MCF 10A (cell line): ENCODE measurements at regions of chr10 and their contacts with region 1.

Region 1: DNA sequence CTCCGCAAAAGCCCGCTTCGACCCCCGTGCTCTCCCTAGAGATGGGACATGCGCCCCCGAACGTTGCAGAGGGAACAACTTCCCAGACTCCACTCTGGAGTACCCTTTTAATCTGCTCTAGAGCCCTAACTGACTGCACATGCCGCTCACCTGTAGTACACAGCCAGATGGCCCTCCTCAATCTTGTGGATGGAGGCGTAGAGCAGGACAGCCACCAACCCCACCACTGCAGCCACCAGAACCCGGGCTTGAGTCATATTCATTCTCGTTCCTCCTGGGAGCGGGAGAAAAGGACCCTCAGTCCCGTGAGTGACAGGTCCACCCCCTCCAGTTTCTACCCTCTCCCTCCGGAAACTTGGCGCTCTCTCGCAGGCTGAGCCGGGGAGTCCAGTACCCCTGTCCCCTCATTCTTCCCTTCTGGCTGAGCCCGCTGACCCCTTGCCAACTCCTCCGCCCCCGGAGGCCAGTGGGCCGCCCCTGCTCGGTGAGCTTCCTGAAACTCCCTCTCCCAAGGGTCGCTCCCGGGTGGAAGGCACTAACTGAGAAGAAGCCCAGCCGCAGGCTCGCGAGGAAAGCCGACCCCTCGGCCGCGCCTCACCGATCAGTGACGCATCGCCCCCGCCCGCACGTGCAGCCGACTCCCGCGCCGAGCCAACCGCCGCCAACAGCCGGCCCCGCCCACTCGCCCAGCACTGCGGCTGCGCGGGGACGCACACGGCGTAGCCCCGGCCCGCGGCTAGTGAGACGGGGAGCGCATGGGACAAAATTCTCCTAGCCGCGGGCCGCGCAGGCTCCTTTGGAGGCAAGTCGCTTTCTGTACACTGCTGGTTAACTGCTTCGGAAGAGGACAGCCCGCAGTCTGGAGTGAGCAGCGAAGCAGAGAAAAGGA is at the start of gene ERLIN1:
- DNase-seq: peak; percentile 94
- H3K4me3 Mint-ChIP-seq: peak within 1 kb of the TSS; percentile 94
- H3K27ac Mint-ChIP-seq: peak within 1 kb of the TSS; percentile 90
- H3K4me1 Mint-ChIP-seq: peaks cover 31% of the 10 kb centered on the region
- H3K27me3 Mint-ChIP-seq: no peaks in the 10 kb centered on the region
- CTCF ChIP-seq: no peak
- total RNA-seq, gene ERLIN1: 38.0 and 42.9 TPM in 2 replicates

Region 2: DNA sequence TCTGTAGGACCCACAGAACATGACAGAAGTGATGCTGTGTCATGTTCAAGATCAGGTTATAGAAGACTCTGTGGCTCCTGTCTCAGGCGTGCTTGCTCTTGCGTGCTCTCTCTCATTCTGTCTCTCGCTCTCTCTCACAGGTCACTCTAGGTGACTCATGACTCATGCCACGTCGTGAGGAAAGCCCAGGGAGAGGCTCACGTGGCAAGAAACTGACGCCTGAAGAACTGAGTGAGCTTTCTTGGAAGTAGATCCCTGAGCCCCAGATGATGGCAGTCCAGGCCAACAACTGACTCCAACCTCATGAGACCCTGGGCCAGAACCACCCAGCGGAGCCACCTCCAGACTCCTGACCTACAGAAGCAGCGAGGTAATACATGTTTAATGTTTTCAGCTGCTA is 279.1 kb before region 1 on chr10:
- CTCF ChIA-PET with region 1: interaction called, 3 read pairs
- POLR2A ChIA-PET with region 1: interaction called, 10 read pairs
- intact Hi-C with region 1: no loop called
- DNase-seq: peak; percentile 96
- H3K4me3 Mint-ChIP-seq: no peak overlapping the region
- H3K27ac Mint-ChIP-seq: peak overlapping the region; percentile 80
- H3K4me1 Mint-ChIP-seq: peaks cover 14% of the 10 kb centered on the region
- H3K27me3 Mint-ChIP-seq: no peaks in the 10 kb centered on the region
- CTCF ChIP-seq: peak; percentile 38

Region 3: DNA sequence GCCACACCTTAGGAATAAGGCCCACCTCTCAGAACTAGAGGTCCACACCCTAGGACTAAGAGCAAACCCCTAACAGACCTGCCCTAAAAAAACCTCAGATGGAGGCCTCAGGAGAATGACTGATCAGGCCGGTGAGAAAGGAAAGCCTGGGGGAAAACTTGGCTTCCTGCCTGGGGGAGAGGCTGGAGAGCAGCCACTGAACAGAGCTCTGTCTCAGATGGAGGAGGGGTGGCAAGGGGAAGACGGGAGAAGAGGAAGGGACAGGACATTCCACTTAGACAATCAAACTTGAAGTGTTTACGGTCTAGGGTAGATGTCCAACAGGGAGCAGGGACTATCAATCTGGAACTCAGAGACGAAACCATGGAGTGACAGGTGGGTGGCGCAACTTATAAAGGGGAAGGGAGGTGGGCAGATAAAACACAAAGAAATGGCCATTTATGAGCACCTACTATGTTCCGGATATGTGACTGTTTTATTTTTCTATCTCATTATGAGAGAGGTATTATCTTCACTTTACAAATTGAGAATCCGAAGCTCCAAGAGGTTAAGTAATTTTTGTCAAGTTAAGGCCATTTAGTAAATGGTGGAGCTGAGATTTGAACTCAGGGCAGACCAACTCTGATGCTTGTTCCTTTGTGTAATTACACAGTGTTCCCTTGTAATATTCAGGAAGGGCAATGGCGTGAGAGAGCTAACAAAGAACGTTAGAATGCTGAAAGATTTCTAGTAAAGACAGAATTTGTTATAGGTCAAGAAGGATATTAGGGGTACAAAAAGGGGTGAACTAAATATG is 258.5 kb before region 1 on chr10:
- CTCF ChIA-PET with region 1: no interaction called
- POLR2A ChIA-PET with region 1: no interaction called
- intact Hi-C with region 1: no loop called
- DNase-seq: peak; percentile 73
- H3K4me3 Mint-ChIP-seq: peak overlapping the region; percentile 42
- H3K27ac Mint-ChIP-seq: peak overlapping the region; percentile 44
- H3K4me1 Mint-ChIP-seq: peaks cover 50% of the 10 kb centered on the region
- H3K27me3 Mint-ChIP-seq: no peaks in the 10 kb centered on the region
- CTCF ChIP-seq: no peak

Region 4: DNA sequence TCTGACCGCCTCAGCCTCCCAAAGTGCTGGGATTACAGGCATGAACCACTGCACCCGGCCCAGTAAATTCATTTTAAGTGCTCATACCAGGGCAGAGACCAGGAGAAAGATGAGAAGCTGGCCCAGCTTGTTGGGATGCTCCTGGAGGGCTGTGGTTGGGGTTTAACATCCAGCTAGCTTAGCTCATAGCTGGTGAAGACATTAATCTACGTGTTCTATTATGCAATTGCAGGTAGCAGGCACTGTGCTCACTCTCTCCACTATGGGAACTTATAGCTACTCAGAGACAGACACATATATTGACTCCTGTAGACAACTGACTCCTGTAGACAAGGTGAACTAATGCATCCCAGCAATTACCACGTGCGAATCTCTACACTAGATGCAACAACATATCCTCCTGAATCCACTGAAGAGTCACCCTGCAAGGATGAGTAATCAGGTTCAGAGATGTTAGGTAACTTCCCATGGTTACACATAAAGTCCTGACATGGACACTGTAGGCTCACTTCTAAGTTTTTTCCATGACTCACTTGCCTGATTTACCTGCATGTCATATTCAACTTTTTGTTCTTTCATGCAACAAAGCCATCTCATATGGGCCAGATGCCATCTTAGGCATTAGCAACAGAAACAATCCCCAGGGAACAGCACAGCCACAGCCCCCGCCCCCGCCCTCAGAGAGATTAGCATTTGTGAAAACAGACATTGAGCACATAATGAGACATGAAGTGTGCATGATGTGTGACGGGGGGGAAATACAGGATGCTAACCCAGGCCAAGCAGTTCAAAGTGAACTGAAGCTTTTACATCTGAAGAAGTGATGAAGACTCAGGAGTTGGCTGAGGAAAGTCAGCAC is 37.0 kb before region 1 on chr10:
- CTCF ChIA-PET with region 1: interaction called, 4 read pairs
- POLR2A ChIA-PET with region 1: interaction called, 16 read pairs
- intact Hi-C with region 1: loop called (anchors 2 kb)
- DNase-seq: peak; percentile 96
- H3K4me3 Mint-ChIP-seq: no peak overlapping the region
- H3K27ac Mint-ChIP-seq: peak overlapping the region; percentile 84
- H3K4me1 Mint-ChIP-seq: peaks cover 28% of the 10 kb centered on the region
- H3K27me3 Mint-ChIP-seq: no peaks in the 10 kb centered on the region
- CTCF ChIP-seq: no peak

Region 5: DNA sequence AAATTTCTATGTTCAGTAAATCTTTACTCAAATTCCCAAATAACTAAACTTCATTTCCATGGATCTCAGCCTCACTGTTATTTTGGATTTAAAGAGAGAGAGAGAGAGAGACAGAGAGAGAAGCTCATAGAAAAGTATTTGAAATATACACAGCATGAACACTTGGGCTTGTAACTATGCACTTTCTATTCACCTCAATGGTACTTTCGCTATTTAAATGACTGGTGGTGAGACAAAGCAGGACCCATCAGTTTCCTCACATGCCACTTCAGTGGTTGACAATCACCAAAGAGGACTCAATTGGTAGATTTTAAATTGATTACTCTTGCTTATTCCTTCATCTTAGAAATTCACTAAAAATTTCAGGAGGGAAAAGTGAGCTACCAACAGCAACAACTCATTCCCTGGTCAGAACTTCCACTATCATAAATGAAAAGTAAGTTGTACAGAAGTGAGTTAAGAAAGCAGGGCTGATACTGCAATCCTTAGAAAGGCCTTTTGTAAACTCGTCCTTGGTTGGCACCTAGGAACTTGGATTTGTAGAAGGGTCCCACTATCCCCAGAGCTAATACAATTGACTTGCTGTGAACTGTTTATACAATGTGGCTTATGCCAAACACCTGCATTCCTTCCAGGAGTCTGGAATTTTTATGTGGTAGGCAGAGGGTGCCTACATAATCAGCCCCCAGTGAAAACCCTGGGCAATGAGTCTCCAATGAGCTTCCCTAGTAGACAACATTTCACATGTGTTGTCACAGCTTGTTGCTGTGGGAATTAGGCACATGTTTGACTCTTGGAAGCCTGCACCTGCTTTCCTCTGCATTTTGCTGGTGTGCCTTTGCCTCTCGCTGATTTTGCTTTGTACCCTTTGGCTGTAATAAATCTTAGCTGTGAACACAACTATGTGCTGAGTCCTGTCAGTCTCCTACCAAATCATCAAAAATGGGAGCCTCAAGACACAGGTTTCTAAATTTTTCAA is 10.6 kb before region 1 on chr10:
- CTCF ChIA-PET with region 1: no interaction called
- POLR2A ChIA-PET with region 1: interaction called, 17 read pairs
- intact Hi-C with region 1: no loop called
- DNase-seq: no peak
- H3K4me3 Mint-ChIP-seq: no peak overlapping the region
- H3K27ac Mint-ChIP-seq: no peak overlapping the region
- H3K4me1 Mint-ChIP-seq: peaks cover 11% of the 10 kb centered on the region
- H3K27me3 Mint-ChIP-seq: no peaks in the 10 kb centered on the region
- CTCF ChIP-seq: no peak

Region 6: DNA sequence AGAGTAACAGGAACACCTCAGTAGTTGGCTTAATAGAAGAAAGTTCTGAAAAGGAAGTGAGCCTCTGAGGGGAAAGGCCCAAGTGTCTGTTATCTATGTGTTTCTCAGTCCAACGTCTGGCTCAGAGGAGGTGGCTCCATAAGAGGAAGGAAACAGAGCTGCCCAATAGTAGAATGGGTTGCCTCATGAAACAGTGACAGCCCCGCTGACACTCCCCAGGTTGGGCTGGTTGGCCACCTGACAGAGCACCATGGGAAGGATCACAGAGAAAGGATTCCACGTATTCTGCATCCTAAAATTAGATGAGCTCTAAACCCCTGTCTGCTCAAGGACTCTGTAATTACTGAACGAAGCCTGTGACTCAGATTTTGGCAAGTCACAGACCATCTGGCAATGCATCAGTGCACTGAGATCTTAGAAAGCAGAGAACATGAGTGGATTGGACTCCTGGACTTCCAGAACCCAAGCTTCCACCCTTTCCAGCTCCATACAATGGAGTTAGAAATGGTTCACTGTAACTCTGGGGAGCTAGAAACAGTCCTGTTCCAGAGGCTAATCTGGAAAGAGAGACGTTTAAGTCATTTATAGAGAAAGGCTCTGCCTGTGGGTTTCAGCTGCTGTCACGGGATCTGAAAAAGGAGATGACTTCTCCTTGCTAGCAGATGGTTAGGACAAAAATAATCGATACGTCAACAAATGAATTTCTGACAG is 141.6 kb after region 1 on chr10:
- CTCF ChIA-PET with region 1: no interaction called
- POLR2A ChIA-PET with region 1: no interaction called
- intact Hi-C with region 1: no loop called
- DNase-seq: no peak
- H3K4me3 Mint-ChIP-seq: no peak overlapping the region
- H3K27ac Mint-ChIP-seq: no peak overlapping the region
- H3K4me1 Mint-ChIP-seq: no peaks in the 10 kb centered on the region
- H3K27me3 Mint-ChIP-seq: peaks cover 81% of the 10 kb centered on the region
- CTCF ChIP-seq: no peak